Gastrocnemius medialis (tissue), 4 donors: ENCODE measurements at regions of chr6 and their contacts with region 1.

Region 1: GRCh38 chr6:150004783-150005717 is 20.3 kb downstream of the RAET1L start:
- DNase-seq: peak; percentile 82 to 85
- ATAC-seq: peak; percentile 89 to 93
- H3K4me3 ChIP-seq: peak overlapping the region; percentile 59 to 74 (median 71)
- H3K27ac ChIP-seq: no peak overlapping the region
- H3K4me1 ChIP-seq: peaks cover 3 to 7% of the 10 kb centered on the region in 2 donors
- H3K27me3 ChIP-seq: peaks cover 14 to 31% (median 16%) of the 10 kb centered on the region in 3 donors
- CTCF ChIP-seq: peak in 1 of 5 experiments; percentile 30
- POLR2A ChIP-seq: no peak

Region 2: DNA sequence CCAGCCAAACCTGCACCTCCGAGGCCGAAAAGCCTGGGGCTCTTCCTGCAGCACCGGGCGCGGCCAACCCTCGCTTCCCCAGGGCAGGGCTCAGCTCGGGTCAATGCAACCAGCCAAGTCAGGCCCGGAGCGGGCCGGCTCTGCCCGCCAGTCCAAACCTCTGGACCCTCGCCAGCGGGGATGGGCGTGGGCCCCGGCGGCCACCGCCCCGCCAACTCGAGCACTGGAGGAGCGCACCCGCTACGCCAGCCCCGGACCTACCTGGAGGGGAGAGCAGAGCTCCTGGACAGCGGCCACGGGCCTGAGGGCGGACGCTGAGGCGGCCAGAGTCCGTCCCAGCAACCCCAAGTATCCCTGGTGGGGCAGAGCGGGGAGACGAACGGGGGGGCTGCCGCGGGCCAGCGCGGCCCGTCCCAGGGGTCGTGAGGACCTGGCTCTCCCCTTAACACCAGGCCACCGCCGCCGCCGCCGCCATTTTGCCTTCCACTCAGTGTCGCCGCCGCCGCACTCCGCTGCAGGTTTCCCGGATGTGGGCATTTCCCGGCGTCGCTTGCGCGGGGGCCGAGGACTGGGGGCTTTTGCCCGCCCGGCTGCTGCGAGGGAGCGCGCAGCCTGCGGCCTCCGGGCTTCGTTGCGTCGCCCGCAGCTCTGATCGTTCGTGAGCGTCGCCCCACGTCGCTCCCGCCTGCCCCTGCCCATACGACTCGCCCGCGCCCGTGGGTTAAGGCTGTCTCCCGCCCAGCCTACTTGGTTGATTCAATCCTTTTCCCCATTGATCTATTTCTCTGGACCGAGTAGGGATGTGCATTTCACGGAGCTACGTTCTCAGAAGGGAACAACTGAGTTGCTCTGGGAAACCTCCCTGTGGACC is 287.2 kb before region 1 on chr6 and contains the start of gene LATS1:
- in situ Hi-C with region 1: no loop called
- intact Hi-C with region 1: no loop called
- DNase-seq: peak; percentile 76 to 84
- ATAC-seq: peak; percentile 93
- H3K4me3 ChIP-seq: peak within 1 kb of the TSS; percentile 77 to 96 (median 92)
- H3K27ac ChIP-seq: peak within 1 kb of the TSS; percentile 95 to 98 (median 97)
- H3K4me1 ChIP-seq: peaks cover 26 to 33% of the 10 kb centered on the region in 2 donors
- H3K27me3 ChIP-seq: no peaks in the 10 kb centered on the region
- CTCF ChIP-seq: no peak
- POLR2A ChIP-seq: peak; percentile 61 to 71
- total RNA-seq, gene LATS1: 6.3 to 21.8 (median 14.4) TPM

Region 3: DNA sequence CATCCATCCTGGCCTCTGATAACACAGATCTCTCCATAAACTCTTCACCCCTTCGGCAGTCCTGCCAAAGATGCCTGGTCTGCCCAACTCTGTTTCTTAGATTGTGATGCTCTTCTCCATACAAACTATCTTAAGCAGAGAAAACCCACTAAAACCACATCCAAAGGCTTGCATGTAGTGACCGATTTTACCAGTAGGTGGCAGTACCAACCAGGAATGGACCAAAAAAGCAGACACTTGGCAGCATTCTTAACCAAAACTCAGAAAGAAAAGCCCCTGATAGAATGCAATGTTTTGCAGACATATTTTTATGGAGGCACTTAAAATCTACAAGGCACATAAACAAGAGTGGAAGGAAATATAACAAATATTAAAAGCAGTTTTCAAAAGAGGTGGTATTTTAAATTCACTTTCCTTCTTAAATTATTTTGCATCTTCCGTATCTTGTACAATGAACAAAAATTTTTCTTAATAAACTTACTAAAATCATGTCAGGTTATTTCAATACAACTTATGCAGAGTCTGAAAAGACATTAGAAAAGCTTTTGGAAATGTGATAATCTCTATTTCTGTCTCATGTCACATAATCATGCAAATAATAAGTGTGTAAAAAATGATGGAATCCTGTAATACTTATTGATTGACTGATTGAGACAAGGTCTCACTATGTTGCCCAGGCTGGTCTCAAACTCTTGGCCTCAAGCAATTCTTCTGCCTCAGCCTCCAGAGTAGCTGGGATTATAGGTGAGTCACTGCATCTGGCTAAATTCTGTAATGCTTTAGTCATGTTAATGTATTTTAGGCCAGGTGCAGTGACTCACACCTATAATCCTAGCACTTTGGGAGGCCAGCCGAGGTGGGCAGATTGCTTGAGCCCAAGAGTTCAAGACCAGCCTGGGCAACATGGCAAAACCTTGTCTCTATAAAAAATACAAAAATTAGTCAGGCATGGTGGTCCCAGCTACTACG is 170.3 kb before region 1 on chr6:
- in situ Hi-C with region 1: loop called in 2 of 4 experiments (anchors 10 to 25 kb)
- intact Hi-C with region 1: no loop called
- DNase-seq: peak in 1 of 2 donors; percentile 22
- ATAC-seq: peak in 1 of 2 donors; percentile 56
- H3K4me3 ChIP-seq: no peak overlapping the region
- H3K27ac ChIP-seq: no peak overlapping the region
- H3K4me1 ChIP-seq: peaks cover 4 to 6% of the 10 kb centered on the region in 2 donors
- H3K27me3 ChIP-seq: no peaks in the 10 kb centered on the region
- CTCF ChIP-seq: peak; percentile 84 to 96 (median 90)
- POLR2A ChIP-seq: no peak

Region 4: GRCh38 chr6:150711584-150712504 is 706.8 kb after region 1 on chr6:
- in situ Hi-C with region 1: no loop called
- intact Hi-C with region 1: no loop called
- DNase-seq: no peak
- ATAC-seq: no peak
- H3K4me3 ChIP-seq: no peak overlapping the region
- H3K27ac ChIP-seq: peak overlapping the region in 1 of 4 donors; percentile 23
- H3K4me1 ChIP-seq: peaks cover 0 to 2% of the 10 kb centered on the region in 2 donors
- H3K27me3 ChIP-seq: no peaks in the 10 kb centered on the region
- CTCF ChIP-seq: no peak
- POLR2A ChIP-seq: no peak